ENCODE measurements at regions of chr2 and their contacts with region 1.

Region 1: GRCh38 chr2:64873472-64873924 is 115.7 kb upstream of the SLC1A4 start:
- DNase-seq: peak; percentile 87
- ATAC-seq: peak; percentile 92
- H3K4me3 Mint-ChIP-seq: peak overlapping the region; percentile 36
- H3K27ac Mint-ChIP-seq: no peak overlapping the region
- H3K4me1 Mint-ChIP-seq: peaks cover 6% of the 10 kb centered on the region
- H3K27me3 Mint-ChIP-seq: peaks cover 1% of the 10 kb centered on the region
- CTCF ChIP-seq: peak; percentile 89

Region 2: GRCh38 chr2:64819774-64820696 is 53.5 kb before region 1 on chr2:
- CTCF ChIA-PET with region 1: no interaction called
- POLR2A ChIA-PET with region 1: no interaction called
- intact Hi-C with region 1: no loop called
- DNase-seq: peak; percentile 69
- ATAC-seq: peak; percentile 96
- H3K4me3 Mint-ChIP-seq: peak overlapping the region; percentile 65
- H3K27ac Mint-ChIP-seq: peak overlapping the region; percentile 93
- H3K4me1 Mint-ChIP-seq: peaks cover 27% of the 10 kb centered on the region
- H3K27me3 Mint-ChIP-seq: no peaks in the 10 kb centered on the region
- CTCF ChIP-seq: no peak

Region 3: GRCh38 chr2:64859312-64860212 is 13.9 kb before region 1 on chr2:
- CTCF ChIA-PET with region 1: interaction called, 10 read pairs
- POLR2A ChIA-PET with region 1: no interaction called
- intact Hi-C with region 1: no loop called
- DNase-seq: no peak
- ATAC-seq: no peak
- H3K4me3 Mint-ChIP-seq: no peak overlapping the region
- H3K27ac Mint-ChIP-seq: no peak overlapping the region
- H3K4me1 Mint-ChIP-seq: peaks cover 8% of the 10 kb centered on the region
- H3K27me3 Mint-ChIP-seq: peaks cover 6% of the 10 kb centered on the region
- CTCF ChIP-seq: no peak

Measured in activated CD8-positive, alpha-beta T cell treated with anti-CD3 and anti-CD28 coated beads for 36 hours (primary cell).